CD4-positive, alpha-beta memory T cell (primary cell): ENCODE measurements at regions of chr5 and their contacts with region 1.

Region 1: DNA sequence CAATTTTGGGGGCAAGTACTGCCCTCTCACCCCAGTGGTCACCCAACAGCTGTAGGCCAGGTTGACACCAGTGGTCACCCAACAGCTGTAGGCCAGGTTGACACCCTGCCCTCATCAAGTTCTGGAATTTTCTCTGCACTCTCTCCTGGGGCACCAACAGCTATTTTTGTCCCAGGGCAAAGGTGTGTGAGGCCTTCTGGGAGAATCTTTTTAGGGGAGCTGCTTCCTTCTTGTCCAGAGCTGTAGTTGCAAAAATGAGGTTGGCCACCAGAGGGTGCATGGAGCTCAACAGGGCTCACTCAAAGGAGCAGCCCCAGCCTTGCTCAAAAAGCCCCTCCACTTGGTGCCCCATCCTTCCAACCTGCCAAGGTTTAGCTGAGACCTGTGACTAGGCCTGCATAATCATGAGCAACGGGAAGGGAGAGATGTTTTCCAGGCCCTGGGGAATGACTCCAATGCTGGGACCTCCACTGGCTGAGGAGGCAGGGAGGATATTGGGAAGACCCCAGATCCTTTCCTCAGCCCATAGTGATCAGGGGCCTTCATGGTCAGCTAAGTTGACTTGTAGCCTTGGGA is 10.6 kb upstream of the P4HA2 start:
- DNase-seq: peak; percentile 40 to 57 (median 52)
- H3K4me3 ChIP-seq: no peak overlapping the region
- H3K4me3 Mint-ChIP-seq: no peak overlapping the region
- H3K27ac ChIP-seq: no peak overlapping the region
- H3K27ac Mint-ChIP-seq: no peak overlapping the region
- H3K4me1 ChIP-seq: no peaks in the 10 kb centered on the region
- H3K4me1 Mint-ChIP-seq: no peaks in the 10 kb centered on the region
- H3K27me3 ChIP-seq: no peaks in the 10 kb centered on the region
- H3K27me3 Mint-ChIP-seq: peaks cover 7% of the 10 kb centered on the region in 2 donors

Region 2: DNA sequence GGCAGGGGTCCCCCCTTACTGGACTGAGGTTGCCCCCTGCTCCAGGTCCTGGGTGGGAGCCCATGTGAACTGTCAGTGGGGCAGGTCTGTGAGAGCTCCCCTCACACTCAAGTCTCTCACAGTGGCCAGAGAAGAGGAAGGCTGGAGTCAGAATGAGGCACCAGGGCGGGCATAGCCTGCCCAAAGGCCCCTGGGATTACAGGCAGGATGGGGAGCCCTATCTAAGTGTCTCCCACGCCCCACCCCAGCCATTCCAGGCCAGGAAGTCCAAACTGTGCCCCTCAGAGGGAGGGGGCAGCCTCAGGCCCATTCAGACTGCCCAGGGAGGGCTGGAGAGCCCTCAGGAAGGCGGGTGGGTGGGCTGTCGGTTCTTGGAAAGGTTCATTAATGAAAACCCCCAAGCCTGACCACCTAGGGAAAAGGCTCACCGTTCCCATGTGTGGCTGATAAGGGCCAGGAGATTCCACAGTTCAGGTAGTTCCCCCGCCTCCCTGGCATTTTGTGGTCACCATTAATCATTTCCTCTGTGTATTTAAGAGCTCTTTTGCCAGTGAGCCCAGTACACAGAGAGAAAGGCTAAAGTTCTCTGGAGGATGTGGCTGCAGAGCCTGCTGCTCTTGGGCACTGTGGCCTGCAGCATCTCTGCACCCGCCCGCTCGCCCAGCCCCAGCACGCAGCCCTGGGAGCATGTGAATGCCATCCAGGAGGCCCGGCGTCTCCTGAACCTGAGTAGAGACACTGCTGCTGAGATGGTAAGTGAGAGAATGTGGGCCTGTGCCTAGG is 164.8 kb before region 1 on chr5 and contains the start of gene CSF2:
- CTCF ChIA-PET with region 1: interaction called, 13 read pairs
- POLR2A ChIA-PET with region 1: no interaction called
- intact Hi-C with region 1: no loop called
- DNase-seq: no peak
- H3K4me3 ChIP-seq: no peak within 1 kb of the TSS
- H3K4me3 Mint-ChIP-seq: peak within 1 kb of the TSS in 5 of 8 donors; percentile 1 to 45 (median 38)
- H3K27ac ChIP-seq: no peak within 1 kb of the TSS
- H3K27ac Mint-ChIP-seq: peak within 1 kb of the TSS; percentile 13 to 61 (median 36)
- H3K4me1 ChIP-seq: peaks cover 52% of the 10 kb centered on the region
- H3K4me1 Mint-ChIP-seq: peaks cover 24 to 84% (median 50%) of the 10 kb centered on the region in 4 donors
- H3K27me3 ChIP-seq: no peaks in the 10 kb centered on the region
- H3K27me3 Mint-ChIP-seq: no peaks in the 10 kb centered on the region
- total RNA-seq, gene CSF2: not detected

Region 3: DNA sequence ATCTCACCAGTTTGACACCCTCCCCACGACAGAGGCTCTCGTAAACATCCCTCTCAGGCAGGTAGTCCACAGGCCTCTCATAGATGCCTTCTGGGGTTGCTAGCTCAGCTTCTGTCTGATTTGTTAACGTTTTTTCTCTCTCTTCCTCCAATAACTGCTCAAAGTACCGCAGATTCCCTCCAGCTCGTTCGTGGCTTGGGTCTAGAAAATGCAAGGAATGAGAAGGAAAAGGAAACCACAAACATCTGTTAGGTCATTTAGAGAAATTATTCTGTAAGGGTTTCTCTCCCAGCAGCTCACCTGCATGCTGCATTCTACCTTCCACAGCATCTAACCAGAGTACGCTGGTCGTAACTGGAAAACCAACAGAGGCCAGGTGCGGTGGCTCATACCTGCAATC is 29.1 kb before region 1 on chr5:
- CTCF ChIA-PET with region 1: interaction called, 18 read pairs
- POLR2A ChIA-PET with region 1: no interaction called
- intact Hi-C with region 1: no loop called
- DNase-seq: no peak
- H3K4me3 ChIP-seq: no peak overlapping the region
- H3K4me3 Mint-ChIP-seq: no peak overlapping the region
- H3K27ac ChIP-seq: no peak overlapping the region
- H3K27ac Mint-ChIP-seq: no peak overlapping the region
- H3K4me1 ChIP-seq: no peaks in the 10 kb centered on the region
- H3K4me1 Mint-ChIP-seq: no peaks in the 10 kb centered on the region
- H3K27me3 ChIP-seq: no peaks in the 10 kb centered on the region
- H3K27me3 Mint-ChIP-seq: no peaks in the 10 kb centered on the region

Region 4: GRCh38 chr5:132219289-132219970 is 18.8 kb before region 1 on chr5:
- CTCF ChIA-PET with region 1: interaction called, 16 read pairs
- POLR2A ChIA-PET with region 1: no interaction called
- intact Hi-C with region 1: no loop called
- DNase-seq: no peak
- H3K4me3 ChIP-seq: no peak overlapping the region
- H3K4me3 Mint-ChIP-seq: no peak overlapping the region
- H3K27ac ChIP-seq: no peak overlapping the region
- H3K27ac Mint-ChIP-seq: no peak overlapping the region
- H3K4me1 ChIP-seq: no peaks in the 10 kb centered on the region
- H3K4me1 Mint-ChIP-seq: no peaks in the 10 kb centered on the region
- H3K27me3 ChIP-seq: no peaks in the 10 kb centered on the region
- H3K27me3 Mint-ChIP-seq: no peaks in the 10 kb centered on the region

Region 5: DNA sequence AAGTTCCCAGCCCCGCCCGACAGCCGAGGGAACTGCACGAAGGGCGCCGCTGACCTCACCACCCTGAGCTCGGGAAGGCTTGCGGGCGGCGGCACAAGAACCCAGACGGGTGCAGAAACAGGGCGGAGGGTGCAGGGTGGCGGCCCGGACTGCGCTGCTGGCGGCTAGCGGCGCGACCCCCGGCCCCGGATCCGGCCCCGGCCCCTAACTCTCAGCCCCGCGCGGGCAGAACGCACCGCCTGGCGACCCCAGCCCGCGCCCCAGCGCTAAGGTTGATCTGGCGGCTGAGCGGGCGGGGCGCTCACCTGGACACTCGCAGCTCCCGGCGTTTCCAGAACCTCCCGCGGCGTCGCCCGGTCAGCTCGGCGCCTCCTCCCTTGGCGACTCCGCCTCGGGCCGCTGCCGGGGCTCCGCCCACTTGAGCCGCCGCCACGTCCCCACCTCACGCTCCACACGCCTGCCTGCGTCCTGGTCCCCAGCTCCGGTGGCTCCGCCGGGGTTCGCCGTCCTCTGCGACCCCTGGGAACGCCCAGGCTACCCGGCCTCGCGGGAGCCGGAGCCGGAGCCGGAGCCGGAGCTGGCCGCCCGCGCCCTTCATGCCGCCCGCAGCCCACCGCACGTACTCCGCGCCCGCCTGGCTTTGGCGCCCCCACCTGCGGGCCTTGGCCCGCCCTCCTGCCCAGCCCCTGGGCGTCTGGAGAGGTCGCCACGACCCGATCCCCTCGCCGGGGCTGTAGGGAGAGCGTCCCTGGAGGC is 10.6 kb before region 1 on chr5 and contains the start of gene P4HA2:
- CTCF ChIA-PET with region 1: interaction called, 16 read pairs
- POLR2A ChIA-PET with region 1: interaction called, 4 read pairs
- intact Hi-C with region 1: no loop called
- DNase-seq: peak in 1 of 5 donors; percentile 14
- H3K4me3 ChIP-seq: peak within 1 kb of the TSS in 1 of 2 donors; percentile 45
- H3K4me3 Mint-ChIP-seq: peak within 1 kb of the TSS; percentile 11 to 72 (median 52)
- H3K27ac ChIP-seq: no peak within 1 kb of the TSS
- H3K27ac Mint-ChIP-seq: peak within 1 kb of the TSS in 2 of 7 donors; percentile 24 to 46
- H3K4me1 ChIP-seq: peaks cover 4% of the 10 kb centered on the region
- H3K4me1 Mint-ChIP-seq: peaks cover 5 to 28% (median 13%) of the 10 kb centered on the region in 4 donors
- H3K27me3 ChIP-seq: no peaks in the 10 kb centered on the region
- H3K27me3 Mint-ChIP-seq: peaks cover 15 to 21% of the 10 kb centered on the region in 2 donors
- total RNA-seq, gene P4HA2: 0.28 to 0.96 TPM

Region 6: GRCh38 chr5:132254321-132254977 is 16.2 kb after region 1 on chr5:
- CTCF ChIA-PET with region 1: interaction called, 14 read pairs
- POLR2A ChIA-PET with region 1: no interaction called
- intact Hi-C with region 1: no loop called
- DNase-seq: no peak
- H3K4me3 ChIP-seq: no peak overlapping the region
- H3K4me3 Mint-ChIP-seq: no peak overlapping the region
- H3K27ac ChIP-seq: no peak overlapping the region
- H3K27ac Mint-ChIP-seq: no peak overlapping the region
- H3K4me1 ChIP-seq: no peaks in the 10 kb centered on the region
- H3K4me1 Mint-ChIP-seq: peaks cover 0 to 4% (median under 1%) of the 10 kb centered on the region in 4 donors
- H3K27me3 ChIP-seq: peaks cover 4% of the 10 kb centered on the region
- H3K27me3 Mint-ChIP-seq: peaks cover 9 to 22% of the 10 kb centered on the region in 2 donors

Region 7: GRCh38 chr5:132327252-132327955 is 89.1 kb after region 1 on chr5:
- CTCF ChIA-PET with region 1: interaction called, 11 read pairs
- POLR2A ChIA-PET with region 1: no interaction called
- intact Hi-C with region 1: no loop called
- DNase-seq: no peak
- H3K4me3 ChIP-seq: no peak overlapping the region
- H3K4me3 Mint-ChIP-seq: no peak overlapping the region
- H3K27ac ChIP-seq: no peak overlapping the region
- H3K27ac Mint-ChIP-seq: no peak overlapping the region
- H3K4me1 ChIP-seq: no peaks in the 10 kb centered on the region
- H3K4me1 Mint-ChIP-seq: no peaks in the 10 kb centered on the region
- H3K27me3 ChIP-seq: no peaks in the 10 kb centered on the region
- H3K27me3 Mint-ChIP-seq: no peaks in the 10 kb centered on the region